Activated CD4-positive, alpha-beta T cell treated with anti-CD3 and anti-CD28 coated beads for 36 hours (primary cell): ENCODE measurements at regions of chr17 and their contacts with region 1.

Region 1: DNA sequence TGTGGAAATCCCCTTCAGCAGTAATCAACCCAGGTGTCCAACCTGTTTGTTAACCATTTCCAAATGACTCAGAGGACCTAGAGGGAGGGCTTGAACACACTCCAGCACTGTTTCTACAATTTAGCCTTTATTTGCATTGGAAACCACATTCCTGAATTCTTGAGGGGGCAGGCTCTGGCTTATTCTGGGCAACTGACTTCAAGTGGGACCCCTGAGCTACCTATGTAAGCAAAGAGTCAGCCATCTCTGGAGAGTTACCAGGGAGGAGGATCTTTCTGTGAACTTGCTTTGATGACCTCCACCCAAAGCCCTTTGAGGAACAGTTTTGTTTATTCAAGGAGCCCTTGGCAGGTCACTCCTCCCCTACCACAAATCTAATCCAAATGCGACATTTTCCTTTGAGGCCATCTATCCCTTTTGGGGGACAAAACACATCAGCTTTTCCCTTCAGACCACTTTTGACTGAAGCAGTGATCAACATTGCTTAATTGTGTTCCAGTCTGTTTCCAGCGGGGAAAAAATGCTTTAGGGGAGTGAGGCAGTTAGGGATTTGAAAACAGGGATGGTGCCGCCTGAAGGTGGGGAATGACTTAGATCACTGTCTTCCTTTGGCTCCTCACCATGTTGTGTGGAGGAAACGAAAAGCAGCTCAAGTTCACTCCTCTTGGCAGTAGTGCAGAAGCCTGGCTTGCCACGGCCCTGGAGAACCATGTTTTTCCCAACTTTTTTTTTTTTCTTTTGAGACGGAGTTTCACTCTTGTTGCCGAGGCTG is 46.2 kb downstream of the TUBD1 start:
- DNase-seq: no peak
- ATAC-seq: peak; percentile 21
- H3K4me3 Mint-ChIP-seq: peak overlapping the region; percentile 46
- H3K27ac Mint-ChIP-seq: peak overlapping the region; percentile 87
- H3K4me1 Mint-ChIP-seq: peaks cover 73% of the 10 kb centered on the region
- H3K27me3 Mint-ChIP-seq: no peaks in the 10 kb centered on the region

Region 2: GRCh38 chr17:58337600-58338453 is 1508.8 kb before region 1 on chr17:
- CTCF ChIA-PET with region 1: no interaction called
- POLR2A ChIA-PET with region 1: no interaction called
- intact Hi-C with region 1: loop called (anchors 5 kb)
- DNase-seq: peak; percentile 97
- ATAC-seq: peak; percentile 57
- H3K4me3 Mint-ChIP-seq: peak overlapping the region; percentile 100
- H3K27ac Mint-ChIP-seq: peak overlapping the region; percentile 99
- H3K4me1 Mint-ChIP-seq: peaks cover 26% of the 10 kb centered on the region
- H3K27me3 Mint-ChIP-seq: no peaks in the 10 kb centered on the region

Region 3: GRCh38 chr17:59361916-59362810 is 484.4 kb before region 1 on chr17:
- CTCF ChIA-PET with region 1: no interaction called
- POLR2A ChIA-PET with region 1: no interaction called
- intact Hi-C with region 1: loop called in 1 of 2 experiments (anchors 2 kb)
- DNase-seq: peak; percentile 55
- ATAC-seq: peak; percentile 73
- H3K4me3 Mint-ChIP-seq: peak overlapping the region; percentile 60
- H3K27ac Mint-ChIP-seq: peak overlapping the region; percentile 96
- H3K4me1 Mint-ChIP-seq: peaks cover 78% of the 10 kb centered on the region
- H3K27me3 Mint-ChIP-seq: no peaks in the 10 kb centered on the region

Region 4: GRCh38 chr17:59572301-59572928 is 274.2 kb before region 1 on chr17:
- CTCF ChIA-PET with region 1: no interaction called
- POLR2A ChIA-PET with region 1: no interaction called
- intact Hi-C with region 1: no loop called
- DNase-seq: peak; percentile 54
- ATAC-seq: peak; percentile 93
- H3K4me3 Mint-ChIP-seq: peak overlapping the region; percentile 31
- H3K27ac Mint-ChIP-seq: peak overlapping the region; percentile 91
- H3K4me1 Mint-ChIP-seq: peaks cover 17% of the 10 kb centered on the region
- H3K27me3 Mint-ChIP-seq: no peaks in the 10 kb centered on the region

Region 5: GRCh38 chr17:59676716-59677115 is 169.9 kb before region 1 on chr17:
- CTCF ChIA-PET with region 1: no interaction called
- POLR2A ChIA-PET with region 1: no interaction called
- intact Hi-C with region 1: no loop called
- DNase-seq: no peak
- ATAC-seq: no peak
- H3K4me3 Mint-ChIP-seq: no peak overlapping the region
- H3K27ac Mint-ChIP-seq: no peak overlapping the region
- H3K4me1 Mint-ChIP-seq: peaks cover under 1% of the 10 kb centered on the region
- H3K27me3 Mint-ChIP-seq: no peaks in the 10 kb centered on the region

Region 6: DNA sequence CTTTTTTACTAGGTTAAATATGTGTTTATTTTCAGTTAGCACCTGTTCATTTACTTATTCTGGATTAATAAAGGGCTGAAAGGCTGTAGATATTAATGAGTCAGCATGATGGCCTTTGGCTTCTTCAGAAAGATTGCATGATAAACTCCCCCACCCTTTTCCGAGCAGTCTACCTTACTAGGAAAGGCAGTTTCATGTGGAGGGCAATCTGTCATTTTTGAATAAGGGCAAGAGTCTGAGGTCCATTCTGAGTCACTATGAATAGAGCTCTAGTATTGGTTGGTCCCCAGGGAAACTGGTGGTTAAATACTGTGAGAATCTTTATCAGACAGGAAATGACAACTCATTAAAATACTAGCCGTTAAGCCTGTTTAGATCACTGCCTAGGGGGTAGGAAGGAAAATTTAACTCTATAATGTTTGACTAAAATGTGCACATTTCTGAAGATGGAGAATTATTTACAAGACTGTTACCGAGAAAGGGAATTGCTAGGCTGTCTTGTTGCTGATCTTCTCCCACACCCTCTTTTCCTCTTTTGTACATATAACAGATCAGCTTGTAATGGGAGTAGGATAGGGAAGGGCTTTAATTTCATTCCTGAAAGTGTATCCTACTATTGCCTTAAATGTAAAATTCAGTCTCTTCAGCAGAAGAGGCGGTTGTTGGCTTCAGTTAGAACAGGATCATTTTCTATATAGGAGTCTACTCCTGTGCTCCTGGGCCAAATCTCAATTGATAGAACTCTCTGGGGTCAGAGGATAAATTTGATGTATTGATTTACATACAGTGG is 17.2 kb before region 1 on chr17:
- CTCF ChIA-PET with region 1: interaction called, 7 read pairs
- POLR2A ChIA-PET with region 1: interaction called, 308 read pairs
- intact Hi-C with region 1: loop called (anchors 1 kb)
- DNase-seq: peak; percentile 65
- ATAC-seq: peak; percentile 72
- H3K4me3 Mint-ChIP-seq: peak overlapping the region; percentile 78
- H3K27ac Mint-ChIP-seq: peak overlapping the region; percentile 93
- H3K4me1 Mint-ChIP-seq: peaks cover 87% of the 10 kb centered on the region
- H3K27me3 Mint-ChIP-seq: no peaks in the 10 kb centered on the region

Region 7: DNA sequence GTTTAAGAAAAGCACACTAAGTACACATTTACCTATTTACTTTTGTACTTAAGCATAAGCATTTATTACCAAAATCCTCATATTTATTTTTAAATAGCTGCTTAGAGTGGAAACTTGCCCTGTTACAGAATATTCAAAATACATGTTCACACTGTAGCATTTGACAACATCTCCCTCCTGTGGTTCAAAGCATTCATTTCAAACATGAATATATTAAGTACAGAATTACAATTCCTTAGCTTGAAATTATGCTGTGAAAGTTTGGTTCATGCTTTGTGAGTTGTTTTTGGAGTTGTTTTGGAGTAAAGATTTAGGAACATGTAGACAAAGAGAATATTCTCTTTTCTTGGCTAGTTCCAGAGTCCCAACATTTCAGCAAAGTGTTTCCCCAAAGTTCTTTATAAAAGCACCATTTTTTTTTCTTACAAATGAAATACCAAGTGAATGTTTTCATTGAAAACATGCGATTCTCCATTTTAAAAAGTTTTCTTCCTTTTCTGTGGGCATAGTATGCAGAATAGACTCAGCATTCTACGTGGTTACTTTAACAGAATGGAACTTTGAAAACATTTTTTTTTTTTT is 13.0 kb after region 1 on chr17:
- CTCF ChIA-PET with region 1: interaction called, 22 read pairs
- POLR2A ChIA-PET with region 1: interaction called, 4 read pairs
- intact Hi-C with region 1: no loop called
- DNase-seq: no peak
- ATAC-seq: peak; percentile 60
- H3K4me3 Mint-ChIP-seq: no peak overlapping the region
- H3K27ac Mint-ChIP-seq: peak overlapping the region; percentile 37
- H3K4me1 Mint-ChIP-seq: peaks cover 20% of the 10 kb centered on the region
- H3K27me3 Mint-ChIP-seq: no peaks in the 10 kb centered on the region

Region 8: DNA sequence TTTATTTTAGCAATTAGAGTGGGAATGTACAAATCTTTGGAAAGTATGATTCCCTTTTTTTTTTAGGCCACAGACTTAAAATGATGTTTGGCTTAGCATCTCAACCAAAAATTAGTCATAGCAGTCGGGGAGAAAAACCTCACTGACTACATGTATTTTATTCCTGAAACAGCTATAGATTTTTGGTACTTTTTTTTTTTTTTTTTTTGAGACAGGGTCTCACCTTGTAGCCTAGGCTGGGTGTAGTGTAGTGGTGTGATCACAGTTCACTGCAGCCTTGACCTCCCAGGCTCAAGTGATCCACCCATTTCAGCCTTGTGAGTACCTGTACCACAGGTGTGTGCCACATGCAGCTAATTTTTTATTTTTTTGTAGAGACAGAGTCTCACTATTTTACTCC is 94.6 kb after region 1 on chr17:
- CTCF ChIA-PET with region 1: no interaction called
- POLR2A ChIA-PET with region 1: no interaction called
- intact Hi-C with region 1: loop called in 1 of 2 experiments (anchors 1 kb)
- DNase-seq: peak; percentile 31
- ATAC-seq: peak; percentile 51
- H3K4me3 Mint-ChIP-seq: peak overlapping the region; percentile 27
- H3K27ac Mint-ChIP-seq: peak overlapping the region; percentile 94
- H3K4me1 Mint-ChIP-seq: peaks cover 53% of the 10 kb centered on the region
- H3K27me3 Mint-ChIP-seq: no peaks in the 10 kb centered on the region